Activated T-helper 1 cell treated with anti-CD3 and anti-CD28 coated beads, Interleukin-12 subunit alpha, Interleukin-12 subunit beta, Interleukin-2, Interleukin-4 antibody, amounts not matched to agents 30 ng/mL and 10 ng/mL and 1 ng/mL, durations not matched to agents 14 hours and 24 hours and 36 hours (primary cell): ENCODE measurements at regions of chr12 and their contacts with region 1.

Region 1: DNA sequence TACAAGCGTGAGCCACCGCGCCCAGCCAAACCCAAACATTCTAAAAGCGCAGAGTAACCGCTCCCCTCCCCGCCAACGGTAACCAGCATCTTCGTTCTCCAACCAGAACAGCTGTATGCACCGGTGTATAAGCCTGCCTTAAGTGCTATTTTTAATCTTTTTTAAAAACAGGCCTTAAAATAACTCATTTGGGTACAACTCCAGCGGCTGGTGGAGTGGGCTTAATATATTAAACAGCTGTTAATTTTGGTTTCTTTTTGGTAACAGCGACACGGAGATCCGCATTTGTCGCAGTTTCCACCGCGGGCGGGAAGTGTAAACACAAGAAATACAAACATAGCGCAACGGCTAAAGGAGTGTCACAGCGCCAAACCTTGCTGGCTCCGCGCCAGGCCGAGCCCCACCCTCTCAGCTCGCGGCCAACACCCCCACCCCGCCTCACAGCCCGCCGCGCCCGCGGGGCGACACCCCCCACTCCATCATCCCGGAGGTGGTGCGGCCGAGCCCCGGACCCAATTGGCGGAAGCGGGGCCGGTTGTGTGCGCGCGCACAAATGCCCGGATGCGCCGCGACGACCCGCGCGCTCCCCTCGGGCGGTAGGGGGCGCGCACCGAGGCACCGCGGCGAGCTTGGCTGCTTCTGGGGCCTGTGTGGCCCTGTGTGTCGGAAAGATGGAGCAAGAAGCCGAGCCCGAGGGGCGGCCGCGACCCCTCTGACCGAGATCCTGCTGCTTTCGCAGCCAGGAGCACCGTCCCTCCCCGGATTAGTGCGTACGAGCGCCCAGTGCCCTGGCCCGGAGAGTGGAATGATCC is at the start of gene MDM2:
- DNase-seq: peak; percentile 98
- H3K4me3 Mint-ChIP-seq: peak within 1 kb of the TSS; percentile 97
- H3K27ac Mint-ChIP-seq: peak within 1 kb of the TSS; percentile 99
- H3K4me1 Mint-ChIP-seq: peaks cover 34% of the 10 kb centered on the region
- H3K27me3 Mint-ChIP-seq: peaks cover 2% of the 10 kb centered on the region
- total RNA-seq, gene MDM2: 279 and 303 TPM in 2 replicates

Region 2: DNA sequence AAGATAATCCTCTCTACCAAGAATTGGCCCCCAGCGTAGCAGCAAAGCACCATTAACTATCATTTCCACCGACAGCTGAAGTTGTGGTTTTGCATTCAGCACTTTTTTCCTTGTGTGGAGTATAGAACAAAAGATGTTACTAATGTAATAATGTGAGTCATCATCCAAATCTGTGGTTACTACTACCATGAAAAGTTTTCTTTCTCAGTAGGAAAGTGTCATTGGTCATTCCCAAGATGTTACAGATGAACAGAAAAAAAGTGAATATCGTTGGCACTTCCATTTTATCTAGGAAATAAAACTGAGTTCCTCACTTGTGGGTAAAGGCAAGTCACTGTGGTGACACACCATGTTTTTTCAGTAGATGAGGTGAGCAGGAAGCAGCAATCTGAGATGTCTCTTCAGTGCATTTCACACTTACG is 618.0 kb before region 1 on chr12:
- intact Hi-C with region 1: loop called (anchors 5 kb)
- DNase-seq: peak; percentile 41
- H3K4me3 Mint-ChIP-seq: peak overlapping the region; percentile 52
- H3K27ac Mint-ChIP-seq: peak overlapping the region; percentile 94
- H3K4me1 Mint-ChIP-seq: peaks cover 75% of the 10 kb centered on the region
- H3K27me3 Mint-ChIP-seq: no peaks in the 10 kb centered on the region

Region 3: GRCh38 chr12:68364893-68365725 is 442.7 kb before region 1 on chr12:
- intact Hi-C with region 1: loop called (anchors 1 kb)
- DNase-seq: peak; percentile 85
- H3K4me3 Mint-ChIP-seq: peak overlapping the region; percentile 77
- H3K27ac Mint-ChIP-seq: peak overlapping the region; percentile 92
- H3K4me1 Mint-ChIP-seq: peaks cover 76% of the 10 kb centered on the region
- H3K27me3 Mint-ChIP-seq: no peaks in the 10 kb centered on the region

Region 4: DNA sequence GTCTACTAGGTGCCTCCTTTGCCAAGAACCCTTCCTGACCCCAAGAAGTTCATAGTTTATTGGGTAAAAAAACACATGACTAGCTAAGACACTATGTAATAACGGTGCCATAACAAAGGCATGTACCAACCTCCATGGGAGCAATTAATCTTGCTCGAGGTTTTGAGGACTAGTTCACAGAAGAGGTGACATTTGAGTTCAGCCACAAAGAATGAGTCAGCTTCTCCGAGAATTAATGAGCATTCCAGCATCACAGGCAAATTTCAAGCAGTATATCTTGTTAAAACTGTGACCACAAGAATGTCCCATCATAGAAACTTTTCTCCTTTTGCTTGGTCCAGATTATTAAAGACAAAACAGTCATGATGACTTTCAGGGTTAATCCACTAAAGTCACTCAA is 310.1 kb before region 1 on chr12:
- intact Hi-C with region 1: loop called (anchors 5 kb)
- DNase-seq: no peak
- H3K4me3 Mint-ChIP-seq: peak overlapping the region; percentile 66
- H3K27ac Mint-ChIP-seq: peak overlapping the region; percentile 94
- H3K4me1 Mint-ChIP-seq: peaks cover 40% of the 10 kb centered on the region
- H3K27me3 Mint-ChIP-seq: no peaks in the 10 kb centered on the region

Region 5: GRCh38 chr12:68686595-68687521 is 120.9 kb before region 1 on chr12 and contains the start of gene NUP107:
- intact Hi-C with region 1: loop called (anchors 1 kb)
- DNase-seq: peak; percentile 95
- H3K4me3 Mint-ChIP-seq: peak within 1 kb of the TSS; percentile 99
- H3K27ac Mint-ChIP-seq: peak within 1 kb of the TSS; percentile 96
- H3K4me1 Mint-ChIP-seq: peaks cover 37% of the 10 kb centered on the region
- H3K27me3 Mint-ChIP-seq: peaks cover 3% of the 10 kb centered on the region
- total RNA-seq, gene NUP107: 123 and 135 TPM in 2 replicates

Region 6: GRCh38 chr12:68831272-68831671 is 23.5 kb after region 1 on chr12:
- intact Hi-C with region 1: loop called (anchors 1 kb)
- DNase-seq: no peak
- H3K4me3 Mint-ChIP-seq: no peak overlapping the region
- H3K27ac Mint-ChIP-seq: no peak overlapping the region
- H3K4me1 Mint-ChIP-seq: peaks cover 29% of the 10 kb centered on the region
- H3K27me3 Mint-ChIP-seq: no peaks in the 10 kb centered on the region

Region 7: DNA sequence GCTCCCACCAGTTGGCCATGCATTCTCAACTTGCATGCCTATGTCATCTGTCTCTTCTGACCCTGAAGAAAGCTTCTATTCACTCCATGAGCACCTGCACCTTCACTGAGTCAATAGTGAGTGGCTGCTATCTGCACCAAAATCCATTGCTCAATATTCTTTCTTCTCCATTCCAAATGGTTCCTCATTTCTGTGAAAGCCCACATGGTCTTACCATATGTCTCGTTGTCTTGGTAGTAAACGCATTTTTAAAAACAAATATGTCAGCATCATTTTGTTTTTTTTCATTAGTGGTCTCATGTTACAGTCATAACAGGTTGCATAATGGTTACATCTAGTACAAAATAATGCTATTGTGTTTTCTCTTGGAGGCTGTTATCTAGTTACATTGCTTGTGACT is 232.1 kb after region 1 on chr12:
- intact Hi-C with region 1: no loop called
- DNase-seq: no peak
- H3K4me3 Mint-ChIP-seq: no peak overlapping the region
- H3K27ac Mint-ChIP-seq: no peak overlapping the region
- H3K4me1 Mint-ChIP-seq: peaks cover 2% of the 10 kb centered on the region
- H3K27me3 Mint-ChIP-seq: no peaks in the 10 kb centered on the region

Region 8: GRCh38 chr12:69097619-69098368 is 290.0 kb after region 1 on chr12:
- intact Hi-C with region 1: no loop called
- DNase-seq: no peak
- H3K4me3 Mint-ChIP-seq: no peak overlapping the region
- H3K27ac Mint-ChIP-seq: no peak overlapping the region
- H3K4me1 Mint-ChIP-seq: peaks cover 8% of the 10 kb centered on the region
- H3K27me3 Mint-ChIP-seq: no peaks in the 10 kb centered on the region